Heart right ventricle (tissue), 16 donors: ENCODE measurements at regions of chr11 and their contacts with region 1.

Region 1: DNA sequence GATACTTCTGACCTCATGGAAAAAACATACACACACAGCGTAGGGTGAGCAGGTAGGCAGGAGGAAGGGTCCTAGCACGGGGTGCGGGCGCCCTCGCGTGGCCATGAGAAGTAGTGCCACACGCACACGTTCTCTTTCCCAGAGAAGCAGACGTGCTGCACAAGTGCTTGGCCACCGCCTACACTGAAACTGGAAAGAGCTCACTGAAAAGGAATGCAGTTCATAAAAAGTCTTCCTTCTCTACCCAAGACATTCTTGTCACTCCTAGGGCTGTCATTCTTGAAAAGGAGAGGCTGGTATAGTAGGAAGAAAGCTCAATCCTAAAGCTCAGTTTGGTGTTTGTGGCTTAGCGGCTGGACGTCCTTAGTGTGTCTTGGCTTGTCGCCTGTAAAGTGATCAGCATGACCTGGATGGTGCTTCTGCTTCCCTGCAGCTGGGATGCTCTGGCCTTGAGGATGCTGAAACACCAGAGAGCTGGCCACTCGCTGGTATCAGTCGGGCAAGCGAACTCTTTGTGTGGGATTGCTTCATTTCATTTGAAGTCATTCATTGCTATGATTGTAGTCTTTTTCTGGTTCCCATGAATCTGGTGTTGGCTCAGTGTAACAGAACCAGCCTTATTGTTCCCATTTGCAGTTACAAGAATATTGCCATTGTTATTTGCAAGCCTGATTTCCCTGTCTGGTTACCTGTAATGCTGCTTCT is 303.8 kb downstream of the NTM start:
- DNase-seq: peak; percentile 46 to 75
- ATAC-seq: peak; percentile 66 to 93 (median 84)
- H3K4me3 ChIP-seq: no peak overlapping the region
- H3K27ac ChIP-seq: peak overlapping the region in 1 of 10 donors; percentile 34
- H3K4me1 ChIP-seq: peaks cover 0 to 7% (median 0%) of the 10 kb centered on the region in 9 donors
- H3K27me3 ChIP-seq: peaks cover 0 to 21% (median 6%) of the 10 kb centered on the region in 7 donors
- CTCF ChIP-seq: peak; percentile 72 to 96 (median 92)

Region 2: DNA sequence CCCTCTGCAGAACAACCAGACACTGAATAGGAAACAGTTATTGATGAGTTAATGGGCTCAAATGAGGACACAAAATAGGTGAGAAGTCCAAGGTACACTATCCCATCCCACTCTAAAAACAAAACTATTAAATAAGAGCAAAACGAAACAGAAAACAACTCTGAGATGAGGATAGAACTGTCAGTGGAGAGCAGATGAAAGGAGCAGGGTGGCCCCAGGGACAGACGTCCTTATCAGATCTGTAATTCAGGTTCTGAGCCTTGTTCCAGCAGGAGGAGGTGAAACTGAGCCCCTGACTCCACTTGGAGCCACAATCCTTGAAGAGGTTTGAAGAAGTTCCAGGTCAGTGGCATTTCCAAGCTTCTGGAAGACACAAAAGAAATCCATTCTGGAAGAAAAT is 749.4 kb before region 1 on chr11:
- intact Hi-C with region 1: loop called in 8 of 10 experiments (anchors 5 to 10 kb)
- DNase-seq: no peak
- ATAC-seq: no peak
- H3K4me3 ChIP-seq: no peak overlapping the region
- H3K27ac ChIP-seq: no peak overlapping the region
- H3K4me1 ChIP-seq: no peaks in the 10 kb centered on the region
- H3K27me3 ChIP-seq: peaks cover 0 to 7% (median 0%) of the 10 kb centered on the region in 7 donors
- CTCF ChIP-seq: no peak

Region 3: DNA sequence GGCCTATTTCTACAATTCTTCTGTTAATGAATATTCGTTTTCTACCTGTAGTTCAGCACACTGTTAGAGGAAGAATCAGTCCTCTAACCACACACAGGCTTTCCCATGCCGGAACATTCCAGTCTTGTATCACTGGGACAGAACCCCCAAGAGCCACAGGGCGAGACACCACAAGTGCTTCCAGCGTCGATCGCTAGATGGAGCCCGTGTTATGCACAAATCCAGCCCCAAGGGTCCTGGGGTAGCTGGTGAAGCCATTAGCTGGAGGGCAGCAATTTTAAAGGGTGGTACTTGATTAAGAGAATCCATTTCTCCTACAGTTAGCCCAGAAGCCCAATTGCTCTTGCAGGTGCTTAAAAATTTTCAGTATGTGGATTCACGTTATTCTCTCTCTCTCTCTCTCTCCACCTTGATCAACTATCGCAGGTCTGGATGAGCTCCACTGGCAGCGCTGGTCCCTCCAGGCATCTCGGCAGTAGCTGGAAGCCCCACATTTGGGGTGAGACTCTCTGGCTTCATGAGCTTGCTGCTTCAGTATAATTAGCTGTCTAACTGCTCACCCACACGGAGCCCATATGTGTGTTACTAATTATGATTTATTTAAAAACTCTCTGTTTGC is 609.7 kb before region 1 on chr11:
- intact Hi-C with region 1: loop called (anchors 2 to 10 kb)
- DNase-seq: peak; percentile 31 to 51
- ATAC-seq: peak in 6 of 8 donors; percentile 49 to 71 (median 60)
- H3K4me3 ChIP-seq: no peak overlapping the region
- H3K27ac ChIP-seq: no peak overlapping the region
- H3K4me1 ChIP-seq: no peaks in the 10 kb centered on the region
- H3K27me3 ChIP-seq: peaks cover 0 to 76% (median 28%) of the 10 kb centered on the region in 7 donors
- CTCF ChIP-seq: peak; percentile 59 to 88 (median 76)

Region 4: DNA sequence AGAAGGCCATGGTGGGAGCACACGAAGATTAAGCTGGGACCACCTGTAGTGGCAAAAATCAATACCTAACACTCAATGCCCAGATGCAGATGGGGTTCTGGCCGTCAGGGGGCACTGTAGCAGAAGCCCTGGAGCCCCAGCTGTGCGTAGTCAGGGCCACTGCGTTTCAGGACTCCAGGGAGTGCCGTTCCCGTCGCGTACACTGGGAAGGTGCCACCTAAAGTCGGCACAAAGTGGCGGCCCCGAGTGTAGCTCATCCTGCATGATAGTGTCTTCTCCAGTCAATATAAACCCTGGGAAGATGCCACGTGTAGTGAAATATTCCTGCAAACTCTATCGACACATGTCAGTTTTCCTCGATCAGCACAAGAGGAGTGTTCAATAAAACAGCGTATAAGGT is 427.5 kb before region 1 on chr11:
- intact Hi-C with region 1: loop called in 6 of 10 experiments (anchors 5 to 10 kb)
- DNase-seq: peak; percentile 8 to 41
- ATAC-seq: peak in 7 of 8 donors; percentile 28 to 86 (median 56)
- H3K4me3 ChIP-seq: no peak overlapping the region
- H3K27ac ChIP-seq: no peak overlapping the region
- H3K4me1 ChIP-seq: peaks cover 0 to 7% (median 0%) of the 10 kb centered on the region in 9 donors
- H3K27me3 ChIP-seq: peaks cover 0 to 61% (median 37%) of the 10 kb centered on the region in 7 donors
- CTCF ChIP-seq: peak; percentile 30 to 61 (median 52)

Region 5: GRCh38 chr11:131511794-131512193 is 162.4 kb before region 1 on chr11:
- intact Hi-C with region 1: loop called in 1 of 10 experiments (anchors 10 kb)
- DNase-seq: no peak
- ATAC-seq: no peak
- H3K4me3 ChIP-seq: no peak overlapping the region
- H3K27ac ChIP-seq: no peak overlapping the region
- H3K4me1 ChIP-seq: no peaks in the 10 kb centered on the region
- H3K27me3 ChIP-seq: peaks cover 0 to 6% (median 0%) of the 10 kb centered on the region in 7 donors
- CTCF ChIP-seq: peak in 8 of 9 donors; percentile 10 to 57 (median 46)

Region 6: GRCh38 chr11:131579932-131580387 is 94.2 kb before region 1 on chr11:
- intact Hi-C with region 1: loop called in 5 of 10 experiments (anchors 5 to 10 kb)
- DNase-seq: no peak
- ATAC-seq: peak in 1 of 8 donors; percentile 39
- H3K4me3 ChIP-seq: no peak overlapping the region
- H3K27ac ChIP-seq: no peak overlapping the region
- H3K4me1 ChIP-seq: no peaks in the 10 kb centered on the region
- H3K27me3 ChIP-seq: peaks cover 0 to 49% (median 38%) of the 10 kb centered on the region in 7 donors
- CTCF ChIP-seq: peak in 7 of 9 donors; percentile 19 to 47 (median 29)

Region 7: GRCh38 chr11:131841028-131841427 is 166.8 kb after region 1 on chr11:
- intact Hi-C with region 1: no loop called
- DNase-seq: no peak
- ATAC-seq: no peak
- H3K4me3 ChIP-seq: no peak overlapping the region
- H3K27ac ChIP-seq: no peak overlapping the region
- H3K4me1 ChIP-seq: no peaks in the 10 kb centered on the region
- H3K27me3 ChIP-seq: peaks cover 0 to 15% (median 0%) of the 10 kb centered on the region in 7 donors
- CTCF ChIP-seq: no peak